RWPE1 (cell line): ENCODE measurements at regions of chr6 and their contacts with region 1.

Region 1: DNA sequence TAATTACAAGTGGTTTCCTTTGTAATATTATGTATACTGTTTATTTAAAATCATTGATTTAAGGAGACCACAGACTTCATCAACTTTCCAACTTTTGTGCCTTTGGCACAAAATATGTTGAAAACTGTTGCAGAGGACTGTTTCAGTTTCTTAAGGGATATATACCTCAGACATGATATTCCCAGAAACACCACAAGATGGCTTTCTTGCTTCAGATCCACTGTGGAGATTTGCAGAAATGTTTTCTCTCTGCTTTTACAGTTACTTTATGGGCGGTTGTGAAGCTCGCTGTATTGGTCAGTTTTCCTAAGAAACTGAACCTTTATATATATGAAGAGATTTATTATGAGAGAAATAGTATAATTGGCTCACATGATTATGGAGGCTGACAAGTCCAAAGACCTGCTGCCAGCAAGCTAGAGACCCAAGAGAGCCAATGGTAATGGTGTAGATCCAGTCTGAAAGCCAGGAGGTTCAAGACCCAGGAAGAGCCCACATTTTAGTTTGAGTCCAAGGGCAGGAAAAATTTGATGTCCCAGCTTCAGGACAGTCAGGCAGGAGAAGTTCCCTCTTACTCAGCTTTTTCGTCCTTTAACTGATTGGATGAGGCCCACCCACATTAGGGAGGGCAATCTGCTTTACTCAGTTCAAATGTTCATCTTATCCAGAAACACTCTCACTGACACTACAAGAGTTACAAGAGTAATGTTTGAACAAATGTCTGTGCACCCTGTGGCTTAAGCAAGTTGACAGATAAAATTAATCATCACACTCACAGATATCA is 12.8 kb downstream of the ME1 start:
- DNase-seq: peak; percentile 48
- H3K27ac ChIP-seq: no peak overlapping the region
- CTCF ChIP-seq: peak; percentile 59

Region 2: DNA sequence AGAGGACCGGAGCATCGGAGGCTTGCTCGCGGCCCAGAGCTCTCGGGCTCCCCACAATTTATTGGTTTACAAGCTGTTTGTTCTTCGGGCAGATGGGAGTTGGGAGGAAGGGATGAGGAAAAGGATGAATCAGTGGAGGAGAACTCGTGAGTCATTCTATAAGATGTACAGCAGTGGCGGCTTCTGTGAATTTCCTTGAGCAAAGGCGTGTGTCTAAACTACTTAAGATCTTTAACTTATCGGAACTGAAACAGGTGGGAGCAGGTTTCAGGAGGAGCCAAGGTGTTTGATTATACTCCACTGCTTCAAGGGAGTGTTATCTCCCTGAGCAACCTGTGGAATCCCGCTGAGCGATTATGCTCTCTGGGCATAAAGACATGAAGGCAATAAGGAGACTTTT is 1120.1 kb before region 1 on chr6:
- CTCF ChIA-PET with region 1: no interaction called
- POLR2A ChIA-PET with region 1: no interaction called
- DNase-seq: peak; percentile 44
- H3K27ac ChIP-seq: peak overlapping the region; percentile 46; the same call in 1 of the 2 replicates
- CTCF ChIP-seq: no peak

Region 3: DNA sequence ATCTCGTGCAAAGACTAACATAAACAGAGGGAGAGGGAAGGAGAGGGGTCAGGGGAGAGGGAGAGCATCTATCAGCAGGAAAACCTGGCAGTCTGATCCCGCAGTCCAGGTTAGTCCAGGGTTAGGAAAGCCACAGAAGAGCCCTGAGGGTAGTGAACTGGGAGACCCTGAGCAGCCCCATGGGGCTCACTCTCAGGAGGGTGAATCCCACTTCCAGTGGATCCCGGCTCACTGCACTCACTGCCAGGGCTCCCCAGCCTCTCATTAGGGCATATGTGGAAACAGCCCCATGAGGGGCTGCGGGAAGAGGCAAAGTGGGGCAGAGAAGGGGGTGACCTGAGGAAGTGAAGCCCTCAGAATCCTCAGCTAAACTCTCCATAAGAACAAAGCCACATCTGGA is 682.3 kb before region 1 on chr6:
- CTCF ChIA-PET with region 1: interaction called, 12 read pairs
- POLR2A ChIA-PET with region 1: no interaction called
- DNase-seq: no peak
- H3K27ac ChIP-seq: no peak overlapping the region
- CTCF ChIP-seq: no peak